ENCODE measurements at regions of chr15 and their contacts with region 1.

Region 1: GRCh38 chr15:42495361-42496212 is at the start of gene SNAP23:
- DNase-seq: peak; percentile 83 to 96 (median 92)

Region 2: DNA sequence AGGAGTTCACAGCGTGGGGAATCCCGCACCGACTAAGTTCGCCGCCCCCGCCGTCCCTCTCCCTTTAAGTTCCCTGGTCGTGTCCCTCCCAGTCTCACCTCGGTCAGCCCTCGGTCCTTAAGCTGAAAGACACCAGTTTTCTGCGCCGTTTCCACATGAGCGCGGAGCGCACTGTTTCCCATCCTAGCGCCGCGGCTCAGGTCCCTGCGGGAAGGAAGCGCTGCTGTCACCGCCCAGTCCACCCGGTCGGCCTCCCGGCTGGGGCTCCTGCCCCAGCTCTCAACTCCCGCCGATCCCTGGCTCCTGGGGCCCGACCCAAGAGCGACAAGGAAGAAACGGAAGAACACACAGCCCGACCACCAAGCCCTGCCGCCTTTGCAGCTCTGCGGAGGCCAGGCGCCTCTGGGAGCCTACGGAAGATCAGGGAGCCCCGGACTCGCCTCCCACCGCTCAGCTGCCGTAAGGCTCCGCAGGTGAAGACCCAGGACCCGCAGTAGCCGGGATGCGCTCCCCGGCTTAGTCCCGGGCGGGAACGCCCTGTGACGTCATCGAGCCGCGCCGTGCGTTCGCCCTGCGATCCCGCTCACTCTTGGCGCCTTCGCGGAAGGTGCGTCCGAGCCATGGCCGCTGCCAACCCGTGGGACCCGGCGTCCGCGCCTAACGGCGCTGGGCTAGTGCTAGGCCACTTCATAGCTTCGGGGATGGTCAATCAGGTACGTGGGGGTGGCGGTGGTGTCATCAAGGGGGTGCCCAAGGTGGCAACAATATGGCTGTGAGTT is 52.9 kb after region 1 on chr15 and contains the starts of genes HAUS2 and LRRC57:
- intact Hi-C with region 1: loop called (anchors 10 kb)
- DNase-seq: peak; percentile 64 to 94 (median 89)

Measured in head of caudate nucleus (tissue), 42 donors.